ENCODE measurements at regions of chr1 and their contacts with region 1.

Region 1: DNA sequence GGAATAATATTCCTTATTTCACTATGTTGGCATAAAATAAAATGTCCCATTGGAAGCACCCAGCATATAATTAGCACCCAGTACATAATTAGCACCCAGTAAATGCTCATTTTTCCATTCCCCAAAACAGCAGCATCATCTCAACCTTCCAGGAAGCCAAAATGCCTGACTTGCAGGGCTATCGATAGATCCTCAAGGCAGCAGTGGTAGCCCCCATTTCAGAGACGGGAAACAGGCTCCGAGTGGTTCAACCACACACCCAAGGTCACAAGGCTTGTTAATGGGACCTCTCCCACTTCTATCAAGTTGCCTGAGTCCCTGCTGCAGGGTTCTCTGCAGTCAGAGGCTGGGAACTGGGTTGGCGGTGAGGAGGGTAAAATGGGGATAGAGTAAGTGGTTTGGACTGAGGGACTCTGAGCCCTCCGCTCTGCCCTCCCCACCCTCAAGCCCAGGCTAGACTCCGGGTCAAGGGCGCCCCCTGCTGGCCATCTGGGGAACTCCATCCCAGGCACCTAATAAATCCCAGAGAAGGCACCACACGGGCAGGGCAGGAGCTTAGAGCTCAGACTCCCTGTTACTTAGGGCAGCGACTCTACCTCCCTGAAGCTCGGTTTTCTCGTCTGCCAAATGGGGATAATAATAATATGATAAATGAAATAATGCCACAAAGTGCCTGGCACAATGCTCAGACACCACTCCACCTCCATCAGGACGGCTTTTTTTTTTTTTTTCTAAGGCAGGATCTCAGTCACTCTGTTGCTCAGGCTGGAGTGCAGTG is 21.9 kb upstream of the LAPTM5 start:
- DNase-seq: peak; percentile 91
- H3K4me3 Mint-ChIP-seq: no peak overlapping the region
- H3K27ac Mint-ChIP-seq: no peak overlapping the region
- H3K4me1 Mint-ChIP-seq: peaks cover 5% of the 10 kb centered on the region
- H3K27me3 Mint-ChIP-seq: peaks cover 9% of the 10 kb centered on the region

Region 2: GRCh38 chr1:30707412-30708360 is 71.8 kb before region 1 on chr1:
- CTCF ChIA-PET with region 1: no interaction called
- POLR2A ChIA-PET with region 1: no interaction called
- DNase-seq: peak; percentile 60
- H3K4me3 Mint-ChIP-seq: no peak overlapping the region
- H3K27ac Mint-ChIP-seq: no peak overlapping the region
- H3K4me1 Mint-ChIP-seq: no peaks in the 10 kb centered on the region
- H3K27me3 Mint-ChIP-seq: peaks cover 10% of the 10 kb centered on the region

Region 3: DNA sequence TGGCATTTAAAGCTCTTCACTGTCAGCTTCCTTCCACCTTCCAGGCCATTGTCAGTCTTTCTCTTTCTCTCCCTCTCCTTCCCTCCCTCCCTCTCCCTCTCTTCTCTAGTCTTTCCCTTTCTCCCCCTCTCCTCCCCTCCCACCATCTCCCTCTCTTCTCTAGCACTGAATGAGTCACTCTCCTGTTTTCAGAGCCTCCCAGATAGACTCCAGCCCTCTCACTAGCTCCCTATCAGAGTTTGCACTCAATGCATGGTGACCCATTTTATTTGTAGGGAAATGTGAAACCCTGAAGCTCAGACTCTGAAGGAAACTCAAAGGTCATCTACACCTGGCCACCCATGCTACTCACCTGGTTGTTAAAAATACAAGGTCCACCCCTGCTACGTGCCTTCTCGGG is 51.7 kb before region 1 on chr1:
- CTCF ChIA-PET with region 1: interaction called, 58 read pairs
- POLR2A ChIA-PET with region 1: interaction called, 9 read pairs
- DNase-seq: no peak
- H3K4me3 Mint-ChIP-seq: no peak overlapping the region
- H3K27ac Mint-ChIP-seq: no peak overlapping the region
- H3K4me1 Mint-ChIP-seq: peaks cover 3% of the 10 kb centered on the region
- H3K27me3 Mint-ChIP-seq: no peaks in the 10 kb centered on the region

Region 4: DNA sequence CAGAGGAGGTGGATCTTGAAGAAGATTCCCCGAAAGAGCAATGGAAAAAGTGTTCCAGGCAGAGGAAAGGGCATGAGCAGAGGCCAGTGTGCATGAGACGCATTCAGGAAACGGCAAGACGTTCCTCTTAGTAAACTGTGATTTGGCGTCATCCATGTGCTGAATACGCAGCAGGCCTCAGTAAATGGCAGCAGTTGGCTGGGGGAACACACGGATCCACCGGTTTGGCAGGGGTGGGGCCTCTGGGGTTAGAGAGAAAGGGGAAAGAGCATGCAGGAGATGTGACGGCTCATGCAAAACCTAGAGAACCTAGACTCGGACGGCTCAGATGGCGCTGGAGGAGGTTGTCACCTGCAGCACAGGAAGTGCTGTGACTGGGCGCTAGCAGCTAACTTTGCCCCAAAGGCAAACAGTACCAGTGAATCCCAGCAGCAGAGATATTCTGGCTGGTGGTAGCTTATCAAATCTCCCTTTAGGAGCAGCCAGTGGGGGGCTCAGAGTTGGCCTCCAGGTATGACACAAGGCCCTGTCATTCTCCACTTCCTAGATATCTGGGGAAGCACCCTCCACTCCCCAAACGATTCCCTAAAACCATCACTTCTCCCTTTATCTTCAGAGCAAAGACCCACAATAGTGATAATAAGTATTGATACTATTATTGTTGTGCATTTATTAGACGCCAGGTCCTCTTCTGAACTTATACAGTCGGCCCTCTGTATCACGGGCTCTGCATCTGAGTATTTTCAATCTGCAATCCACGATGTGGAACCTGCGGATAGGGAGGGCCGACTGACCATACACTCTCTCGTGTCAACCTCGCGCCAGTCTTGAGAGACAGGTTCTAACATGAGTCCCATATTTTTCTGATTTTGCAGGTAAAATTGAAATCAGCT is 29.5 kb before region 1 on chr1:
- CTCF ChIA-PET with region 1: interaction called, 117 read pairs
- POLR2A ChIA-PET with region 1: interaction called, 3 read pairs
- DNase-seq: peak; percentile 81
- H3K4me3 Mint-ChIP-seq: peak overlapping the region; percentile 75
- H3K27ac Mint-ChIP-seq: peak overlapping the region; percentile 91
- H3K4me1 Mint-ChIP-seq: peaks cover 99% of the 10 kb centered on the region
- H3K27me3 Mint-ChIP-seq: no peaks in the 10 kb centered on the region

Region 5: GRCh38 chr1:30764939-30765555 is 14.4 kb before region 1 on chr1:
- CTCF ChIA-PET with region 1: interaction called, 117 read pairs
- POLR2A ChIA-PET with region 1: interaction called, 3 read pairs
- DNase-seq: no peak
- H3K4me3 Mint-ChIP-seq: no peak overlapping the region
- H3K27ac Mint-ChIP-seq: no peak overlapping the region
- H3K4me1 Mint-ChIP-seq: peaks cover 37% of the 10 kb centered on the region
- H3K27me3 Mint-ChIP-seq: no peaks in the 10 kb centered on the region

Region 6: DNA sequence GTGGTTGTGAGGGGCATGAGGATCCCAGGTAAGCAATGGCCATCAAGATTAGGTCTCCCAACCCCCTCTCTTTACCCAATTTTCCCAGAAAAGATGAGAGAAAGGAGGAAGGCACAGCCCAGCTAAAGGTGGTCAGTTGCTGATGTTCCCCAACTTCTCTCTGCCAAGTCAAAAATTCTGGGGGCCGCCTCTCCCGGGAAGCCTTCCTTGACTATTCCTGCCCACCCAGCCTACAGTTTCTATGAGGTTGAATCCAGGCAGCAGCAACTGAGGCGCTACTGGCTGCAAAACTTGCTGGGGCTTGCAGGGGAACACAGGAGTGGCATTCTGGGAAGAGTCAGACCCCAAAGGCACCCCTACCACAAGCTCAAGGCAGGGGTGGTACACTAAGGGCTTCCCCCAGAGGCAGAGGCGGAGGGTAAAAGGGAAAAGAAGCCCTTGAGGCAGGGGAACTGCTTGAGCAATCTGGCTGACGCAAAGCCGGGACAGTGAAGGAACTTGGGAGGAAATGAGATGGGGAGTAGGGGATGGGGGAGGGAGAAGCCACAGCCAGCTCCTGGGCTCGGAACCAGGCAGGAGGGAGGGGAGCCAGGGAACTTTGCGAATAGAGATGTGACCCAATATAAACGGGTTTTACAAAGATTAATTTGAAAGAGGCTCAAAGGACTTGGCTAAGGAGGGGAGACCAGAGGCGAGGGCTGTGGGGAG is 97.9 kb after region 1 on chr1:
- CTCF ChIA-PET with region 1: no interaction called
- POLR2A ChIA-PET with region 1: no interaction called
- DNase-seq: no peak
- H3K4me3 Mint-ChIP-seq: no peak overlapping the region
- H3K27ac Mint-ChIP-seq: no peak overlapping the region
- H3K4me1 Mint-ChIP-seq: no peaks in the 10 kb centered on the region
- H3K27me3 Mint-ChIP-seq: peaks cover 39% of the 10 kb centered on the region

Region 7: DNA sequence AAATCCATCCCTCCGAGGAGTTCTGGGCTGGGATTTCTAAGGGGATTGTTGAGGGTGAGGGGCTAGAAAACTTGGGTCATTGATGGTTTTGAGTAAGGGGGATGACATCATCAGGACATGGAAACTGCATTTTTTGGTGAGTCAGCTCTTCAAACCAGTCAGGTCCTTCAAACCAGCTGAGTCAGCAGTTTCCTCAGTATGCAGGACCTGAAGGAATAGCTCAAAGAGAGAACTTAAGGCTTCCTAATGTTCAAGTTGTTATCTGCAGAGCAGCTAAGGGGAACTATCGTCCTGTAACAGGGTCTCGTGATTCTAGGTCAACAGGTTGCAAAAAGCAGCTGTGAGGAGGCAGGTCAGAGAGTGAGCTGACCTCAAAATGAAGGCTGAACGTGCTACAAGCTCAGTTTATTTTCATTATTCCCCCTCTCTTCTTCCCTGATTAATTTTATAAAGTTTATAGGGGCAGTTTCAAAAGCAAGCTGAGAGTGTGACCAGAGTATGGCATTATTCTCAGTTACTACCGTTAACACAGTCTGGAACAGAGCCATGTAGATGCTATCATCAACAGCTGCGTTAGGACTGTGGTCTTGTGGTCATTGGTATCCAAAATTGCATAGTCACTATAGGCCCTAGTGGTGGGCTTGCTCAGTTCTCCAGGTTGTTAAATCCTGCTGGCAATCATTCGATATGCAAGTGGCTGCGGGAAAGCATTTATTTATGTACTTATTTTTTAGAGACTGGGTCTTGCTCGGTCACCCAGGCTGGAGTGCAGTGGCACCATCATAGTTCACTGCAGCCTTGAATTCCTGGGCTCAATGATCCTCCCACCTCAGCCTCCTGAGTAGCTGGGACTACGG is 139.8 kb after region 1 on chr1:
- CTCF ChIA-PET with region 1: interaction called, 21 read pairs
- POLR2A ChIA-PET with region 1: no interaction called
- DNase-seq: no peak
- H3K4me3 Mint-ChIP-seq: no peak overlapping the region
- H3K27ac Mint-ChIP-seq: no peak overlapping the region
- H3K4me1 Mint-ChIP-seq: peaks cover 5% of the 10 kb centered on the region
- H3K27me3 Mint-ChIP-seq: peaks cover 6% of the 10 kb centered on the region

Region 8: DNA sequence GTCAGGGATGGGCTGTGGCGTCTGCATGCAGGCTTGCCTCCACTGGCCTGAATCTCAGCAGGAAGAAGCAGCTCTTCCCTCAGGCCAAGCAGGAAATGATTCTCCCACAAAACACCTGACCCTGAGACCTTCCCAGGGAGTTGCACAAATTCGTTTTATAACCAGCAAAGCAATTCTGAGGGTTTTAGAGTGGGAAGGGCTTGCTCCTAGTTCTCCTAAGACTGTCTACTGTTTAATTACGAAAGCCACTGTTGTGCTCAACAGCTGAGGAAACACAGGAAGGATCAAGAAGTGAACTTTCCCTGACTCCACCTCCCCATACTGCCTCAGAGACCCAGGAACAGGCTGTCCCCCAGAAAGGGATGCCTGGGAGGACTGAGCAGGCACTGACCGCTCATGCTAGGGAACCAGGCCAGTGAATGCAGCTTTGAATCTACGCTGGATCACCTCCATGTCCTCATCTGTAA is 323.0 kb after region 1 on chr1:
- CTCF ChIA-PET with region 1: no interaction called
- POLR2A ChIA-PET with region 1: no interaction called
- DNase-seq: no peak
- H3K4me3 Mint-ChIP-seq: no peak overlapping the region
- H3K27ac Mint-ChIP-seq: no peak overlapping the region
- H3K4me1 Mint-ChIP-seq: no peaks in the 10 kb centered on the region
- H3K27me3 Mint-ChIP-seq: no peaks in the 10 kb centered on the region